OCI-LY7 (cell line): ENCODE measurements at regions of chr9 and their contacts with region 1.

Region 1: DNA sequence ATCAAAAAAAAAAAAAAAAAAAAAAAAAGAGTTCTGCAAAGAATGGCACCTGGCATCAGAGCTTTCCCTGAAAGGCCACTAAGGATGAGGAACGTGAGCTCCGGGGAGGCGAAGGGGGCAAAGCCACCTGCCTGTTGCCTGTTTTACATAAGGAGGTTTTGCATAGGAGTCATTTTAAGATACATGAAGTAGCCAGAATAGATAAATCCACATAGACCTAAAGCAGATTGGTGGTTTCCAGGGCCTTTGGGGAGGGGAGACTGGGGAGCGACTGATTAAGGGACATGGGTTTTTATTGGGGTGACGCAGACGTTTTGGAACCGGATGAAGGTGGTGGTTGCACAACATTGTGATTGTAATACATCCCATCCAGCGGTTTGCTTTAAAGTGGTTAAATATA is 7.1 kb downstream of the NEK6 start:
- DNase-seq: peak; percentile 94
- H3K4me3 ChIP-seq: peak overlapping the region; percentile 42
- H3K27ac ChIP-seq: peak overlapping the region; percentile 76
- H3K4me1 ChIP-seq: peaks cover 92% of the 10 kb centered on the region
- CTCF ChIP-seq: no peak

Region 2: GRCh38 chr9:124202447-124202971 is 62.3 kb before region 1 on chr9:
- CTCF ChIA-PET with region 1: no interaction called
- POLR2A ChIA-PET with region 1: interaction called, 3 read pairs
- intact Hi-C with region 1: loop called (anchors 1 kb)
- DNase-seq: peak; percentile 95
- H3K4me3 ChIP-seq: peak overlapping the region; percentile 35
- H3K27ac ChIP-seq: peak overlapping the region; percentile 79
- H3K4me1 ChIP-seq: peaks cover 95% of the 10 kb centered on the region
- CTCF ChIP-seq: peak; percentile 57; the same call in 1 of the 2 replicates

Region 3: DNA sequence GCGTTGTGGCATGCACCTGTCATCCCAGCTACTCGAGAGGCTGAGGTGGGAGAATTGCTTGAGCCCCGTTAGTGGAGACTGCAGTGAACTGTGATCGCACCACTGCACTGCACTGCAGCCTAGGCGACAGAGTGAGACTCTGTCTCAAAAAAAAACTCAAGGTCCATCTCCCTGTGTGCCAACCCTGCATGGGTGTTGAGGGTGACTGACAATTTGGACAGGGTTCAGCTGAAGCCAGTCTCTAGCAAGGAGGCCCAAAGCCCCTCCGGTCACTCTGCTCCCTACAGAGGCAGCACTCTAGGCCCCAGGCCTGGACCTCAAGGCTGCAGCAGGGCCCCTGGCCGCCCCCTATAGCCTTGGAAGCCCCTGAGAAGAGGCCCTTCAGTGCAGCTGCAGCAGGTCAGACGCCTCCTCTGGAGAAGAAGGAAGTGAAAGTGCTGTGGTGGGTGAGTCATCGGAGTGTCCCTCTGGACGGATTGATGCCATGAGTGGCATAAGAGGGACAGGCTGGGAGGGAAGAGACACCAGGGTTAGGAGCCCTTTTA is 46.3 kb before region 1 on chr9:
- CTCF ChIA-PET with region 1: no interaction called
- POLR2A ChIA-PET with region 1: no interaction called
- intact Hi-C with region 1: loop called (anchors 2 kb)
- DNase-seq: peak; percentile 88
- H3K4me3 ChIP-seq: peak overlapping the region; percentile 49
- H3K27ac ChIP-seq: peak overlapping the region; percentile 74
- H3K4me1 ChIP-seq: peaks cover 68% of the 10 kb centered on the region
- CTCF ChIP-seq: no peak

Region 4: DNA sequence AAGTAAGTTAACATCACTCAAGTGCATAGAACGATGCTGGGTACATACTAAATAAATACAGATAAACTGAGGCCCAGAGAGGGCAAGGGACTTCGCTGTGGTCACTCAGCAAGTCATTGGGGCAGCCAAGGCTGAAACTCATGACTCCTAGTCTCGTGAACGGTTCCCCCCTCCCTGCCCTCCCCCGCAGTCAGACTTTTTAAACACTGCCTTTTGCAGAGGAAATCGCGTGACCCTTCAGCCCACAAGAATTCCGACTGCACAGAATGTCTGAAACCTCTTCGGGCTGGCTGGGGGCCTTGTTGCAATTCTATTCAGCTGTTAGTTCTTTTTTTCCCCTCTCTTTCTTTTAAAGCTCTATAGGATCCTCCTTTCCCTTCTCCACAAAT is 21.1 kb after region 1 on chr9:
- CTCF ChIA-PET with region 1: interaction called, 3 read pairs
- POLR2A ChIA-PET with region 1: interaction called, 4 read pairs
- intact Hi-C with region 1: loop called (anchors 2 kb)
- DNase-seq: no peak
- H3K4me3 ChIP-seq: no peak overlapping the region
- H3K27ac ChIP-seq: no peak overlapping the region
- H3K4me1 ChIP-seq: peaks cover 35% of the 10 kb centered on the region
- CTCF ChIP-seq: no peak

Region 5: DNA sequence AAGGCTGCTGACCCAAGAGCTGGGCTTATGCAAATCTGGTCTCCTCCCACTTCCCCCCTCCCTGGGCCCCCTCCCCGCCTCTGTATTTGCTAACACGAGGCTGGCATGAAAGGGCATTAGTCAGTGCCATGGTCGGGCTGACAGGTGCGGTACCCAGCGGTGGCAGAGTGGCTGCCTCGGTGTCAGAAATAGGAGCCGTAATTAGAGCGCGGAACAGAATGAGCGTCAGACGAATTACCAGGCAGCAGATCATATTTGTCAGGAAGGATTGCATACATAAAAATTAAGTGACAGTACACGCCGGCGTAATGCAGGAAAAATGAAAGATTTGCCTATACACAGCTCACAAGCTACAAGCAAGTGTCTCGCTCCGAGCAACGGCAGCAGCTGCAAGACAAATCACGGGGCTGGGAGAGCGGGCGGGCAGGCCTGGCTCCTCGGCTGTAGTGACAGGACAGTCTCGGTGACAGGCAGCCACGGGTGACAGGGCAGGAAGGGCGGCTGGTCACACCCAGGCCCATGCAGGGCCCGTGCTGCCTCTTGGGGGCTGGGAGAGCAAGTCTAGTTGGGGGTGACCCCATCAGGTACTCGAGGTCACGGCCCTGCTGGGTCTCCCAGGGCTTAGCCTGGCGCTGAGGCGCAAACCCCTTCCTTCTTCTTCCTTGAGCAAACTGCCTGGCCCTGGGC is 65.3 kb after region 1 on chr9:
- CTCF ChIA-PET with region 1: no interaction called
- POLR2A ChIA-PET with region 1: no interaction called
- intact Hi-C with region 1: no loop called
- DNase-seq: no peak
- H3K4me3 ChIP-seq: no peak overlapping the region
- H3K27ac ChIP-seq: no peak overlapping the region
- H3K4me1 ChIP-seq: no peaks in the 10 kb centered on the region
- CTCF ChIP-seq: no peak